Activated T-helper 2 cell treated with anti-CD3 and anti-CD28 coated beads, Interferon-gamma antibody, Interleukin-2, Interleukin-4, amounts not matched to agents 10 μg/mL and 5 μg/mL and 100 μg/mL, durations not matched to agents 14 hours and 24 hours and 36 hours (primary cell): ENCODE measurements at regions of chr3 and their contacts with region 1.

Region 1: DNA sequence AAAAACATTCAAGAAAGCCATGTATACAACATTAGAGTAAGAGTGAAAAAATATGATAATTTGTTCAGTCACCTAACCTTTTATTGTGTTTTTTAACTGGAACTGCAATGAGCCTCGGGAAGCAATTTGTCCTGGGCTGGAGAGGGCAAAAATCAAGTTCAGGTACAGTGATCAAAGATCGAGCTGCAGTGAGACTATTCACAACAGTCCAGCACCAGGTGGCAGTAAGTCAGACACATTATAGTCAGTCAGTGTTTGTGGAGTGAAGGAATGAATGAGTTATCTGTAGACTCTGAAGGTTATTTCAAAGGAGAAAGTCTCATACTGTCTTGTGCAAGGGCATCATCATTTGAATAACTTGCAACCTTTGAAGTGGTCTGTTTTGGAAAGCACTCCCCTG is 116.6 kb downstream of the CHDH start:
- DNase-seq: no peak
- H3K4me3 Mint-ChIP-seq: no peak overlapping the region
- H3K27ac Mint-ChIP-seq: no peak overlapping the region
- H3K4me1 Mint-ChIP-seq: peaks cover 60% of the 10 kb centered on the region
- H3K27me3 Mint-ChIP-seq: peaks cover 6% of the 10 kb centered on the region

Region 2: DNA sequence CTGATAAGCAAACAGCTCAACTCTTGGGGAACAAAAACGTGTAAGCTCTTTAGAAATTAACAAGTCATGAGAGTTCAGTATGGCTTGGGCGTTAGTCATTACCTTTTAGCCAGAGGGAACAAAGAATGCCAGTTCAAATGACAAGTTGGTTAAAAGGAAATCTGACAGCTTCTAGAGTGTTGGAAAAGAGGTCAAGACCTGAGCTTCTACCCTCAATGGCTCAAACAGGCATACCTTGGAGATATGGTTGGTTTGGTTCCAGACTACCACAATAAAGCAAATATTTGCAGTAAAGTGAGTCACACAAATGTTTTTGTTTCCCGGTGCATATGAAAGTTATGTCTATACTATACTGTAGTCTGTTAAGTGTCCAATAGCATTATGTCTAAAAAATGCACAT is 99.1 kb before region 1 on chr3:
- intact Hi-C with region 1: no loop called
- DNase-seq: no peak
- H3K4me3 Mint-ChIP-seq: no peak overlapping the region
- H3K27ac Mint-ChIP-seq: no peak overlapping the region
- H3K4me1 Mint-ChIP-seq: no peaks in the 10 kb centered on the region
- H3K27me3 Mint-ChIP-seq: peaks cover 14% of the 10 kb centered on the region

Region 3: GRCh38 chr3:53748512-53749271 is 19.1 kb after region 1 on chr3:
- intact Hi-C with region 1: loop called (anchors 1 kb)
- DNase-seq: no peak
- H3K4me3 Mint-ChIP-seq: no peak overlapping the region
- H3K27ac Mint-ChIP-seq: peak overlapping the region; percentile 86
- H3K4me1 Mint-ChIP-seq: peaks cover 54% of the 10 kb centered on the region
- H3K27me3 Mint-ChIP-seq: no peaks in the 10 kb centered on the region

Region 4: GRCh38 chr3:53845103-53845880 is 115.7 kb after region 1 on chr3:
- intact Hi-C with region 1: loop called (anchors 5 kb)
- DNase-seq: no peak
- H3K4me3 Mint-ChIP-seq: peak overlapping the region; percentile 79
- H3K27ac Mint-ChIP-seq: peak overlapping the region; percentile 38
- H3K4me1 Mint-ChIP-seq: peaks cover 22% of the 10 kb centered on the region
- H3K27me3 Mint-ChIP-seq: peaks cover 51% of the 10 kb centered on the region

Region 5: DNA sequence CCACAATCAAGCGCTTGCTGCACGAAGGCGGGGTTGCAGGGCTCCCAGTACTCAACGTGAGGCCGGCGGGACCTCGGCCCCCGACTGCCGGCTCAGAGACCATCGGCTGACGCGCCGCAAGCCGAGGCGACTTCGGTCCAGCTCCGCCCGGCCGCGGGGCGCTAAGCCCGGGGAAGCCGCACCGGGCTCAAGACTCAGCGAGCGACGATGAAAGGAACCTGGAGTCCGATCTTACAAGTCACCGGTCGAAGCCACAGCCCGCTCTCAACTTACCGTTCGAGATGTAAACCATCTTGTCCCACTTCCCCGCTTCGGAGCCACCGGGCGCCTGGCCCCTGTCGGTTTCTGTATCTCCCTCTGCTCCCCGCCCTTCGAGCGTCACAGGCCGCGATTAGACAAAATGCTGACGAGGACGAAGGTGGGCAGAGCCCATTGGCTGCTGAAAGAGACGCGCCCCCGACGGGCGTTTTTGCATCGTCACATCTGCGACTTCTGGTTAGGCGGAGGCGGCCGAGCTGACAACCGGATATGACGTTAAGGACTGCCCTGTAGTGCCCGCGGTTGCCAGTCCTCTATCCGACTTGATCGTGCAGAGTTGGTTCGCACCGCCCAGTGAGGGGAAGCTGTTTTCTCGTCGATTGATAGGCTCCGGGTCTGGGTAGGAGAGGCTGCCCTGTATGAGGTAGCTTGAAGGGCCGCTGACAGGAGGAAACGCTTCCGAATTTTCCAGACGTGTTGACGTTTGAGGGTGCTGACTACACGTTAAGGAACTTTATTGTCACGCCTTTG is 162.1 kb after region 1 on chr3 and contains the start of gene SELENOK:
- intact Hi-C with region 1: loop called (anchors 5 kb)
- DNase-seq: peak; percentile 98
- H3K4me3 Mint-ChIP-seq: peak within 1 kb of the TSS; percentile 93
- H3K27ac Mint-ChIP-seq: peak within 1 kb of the TSS; percentile 97
- H3K4me1 Mint-ChIP-seq: peaks cover 47% of the 10 kb centered on the region
- H3K27me3 Mint-ChIP-seq: peaks cover 19% of the 10 kb centered on the region
- total RNA-seq, gene SELENOK: 73.0 and 81.0 TPM in 2 replicates

Region 6: GRCh38 chr3:54830658-54831057 is 1101.0 kb after region 1 on chr3:
- intact Hi-C with region 1: no loop called
- DNase-seq: no peak
- H3K4me3 Mint-ChIP-seq: no peak overlapping the region
- H3K27ac Mint-ChIP-seq: no peak overlapping the region
- H3K4me1 Mint-ChIP-seq: no peaks in the 10 kb centered on the region
- H3K27me3 Mint-ChIP-seq: no peaks in the 10 kb centered on the region